ENCODE measurements at regions of chr19 and their contacts with region 1.

Region 1: GRCh38 chr19:907183-907853 is 5.7 kb downstream of the R3HDM4 start:
- DNase-seq: peak; percentile 52
- ATAC-seq: no peak
- H3K4me3 Mint-ChIP-seq: no peak overlapping the region
- H3K27ac Mint-ChIP-seq: peak overlapping the region; percentile 72
- H3K4me1 Mint-ChIP-seq: peaks cover 54% of the 10 kb centered on the region
- H3K27me3 Mint-ChIP-seq: no peaks in the 10 kb centered on the region

Region 2: GRCh38 chr19:892243-893050 is 14.9 kb before region 1 on chr19:
- CTCF ChIA-PET with region 1: interaction called, 8 read pairs
- POLR2A ChIA-PET with region 1: interaction called, 36 read pairs
- DNase-seq: peak; percentile 60
- ATAC-seq: peak; percentile 54
- H3K4me3 Mint-ChIP-seq: peak overlapping the region; percentile 86
- H3K27ac Mint-ChIP-seq: peak overlapping the region; percentile 99
- H3K4me1 Mint-ChIP-seq: peaks cover 31% of the 10 kb centered on the region
- H3K27me3 Mint-ChIP-seq: no peaks in the 10 kb centered on the region

Measured in activated CD8-positive, alpha-beta T cell treated with anti-CD3 and anti-CD28 coated beads, Interleukin-2, amount 10 ng/mL, durations not matched to agents 7 days and 5 days (primary cell).